ENCODE measurements at regions of chr2 and their contacts with region 1.

Region 1: GRCh38 chr2:5915881-5916310 is 223.7 kb downstream of the SOX11 start:
- DNase-seq: no peak
- ATAC-seq: peak in 1 of 2 donors; percentile 15

Region 2: GRCh38 chr2:5691975-5692529 is 223.8 kb before region 1 on chr2 and contains the start of gene SOX11:
- intact Hi-C with region 1: loop called in 1 of 2 experiments (anchors 10 kb)
- DNase-seq: peak; percentile 59
- ATAC-seq: peak; percentile 40 to 71
- total RNA-seq, gene SOX11: 0.21 to 0.42 TPM

Region 3: GRCh38 chr2:6031200-6031867 is 115.4 kb after region 1 on chr2:
- intact Hi-C with region 1: no loop called
- DNase-seq: no peak
- ATAC-seq: no peak

Measured in left cardiac atrium (tissue), 4 donors.